Activated B cell treated with CpG ODN at 0.5 μM for 24 hours (primary cell): ENCODE measurements at regions of chr3 and their contacts with region 1.

Region 1: GRCh38 chr3:156554842-156555687 is at the start of gene SSR3:
- DNase-seq: peak; percentile 94
- ATAC-seq: peak; percentile 99
- H3K4me3 Mint-ChIP-seq: peak within 1 kb of the TSS; percentile 98
- H3K27ac Mint-ChIP-seq: peak within 1 kb of the TSS; percentile 91
- H3K4me1 Mint-ChIP-seq: peaks cover 37% of the 10 kb centered on the region
- H3K27me3 Mint-ChIP-seq: no peaks in the 10 kb centered on the region
- CTCF ChIP-seq: no peak
- total RNA-seq, gene SSR3: 64.3 and 69.2 TPM in 2 replicates

Region 2: DNA sequence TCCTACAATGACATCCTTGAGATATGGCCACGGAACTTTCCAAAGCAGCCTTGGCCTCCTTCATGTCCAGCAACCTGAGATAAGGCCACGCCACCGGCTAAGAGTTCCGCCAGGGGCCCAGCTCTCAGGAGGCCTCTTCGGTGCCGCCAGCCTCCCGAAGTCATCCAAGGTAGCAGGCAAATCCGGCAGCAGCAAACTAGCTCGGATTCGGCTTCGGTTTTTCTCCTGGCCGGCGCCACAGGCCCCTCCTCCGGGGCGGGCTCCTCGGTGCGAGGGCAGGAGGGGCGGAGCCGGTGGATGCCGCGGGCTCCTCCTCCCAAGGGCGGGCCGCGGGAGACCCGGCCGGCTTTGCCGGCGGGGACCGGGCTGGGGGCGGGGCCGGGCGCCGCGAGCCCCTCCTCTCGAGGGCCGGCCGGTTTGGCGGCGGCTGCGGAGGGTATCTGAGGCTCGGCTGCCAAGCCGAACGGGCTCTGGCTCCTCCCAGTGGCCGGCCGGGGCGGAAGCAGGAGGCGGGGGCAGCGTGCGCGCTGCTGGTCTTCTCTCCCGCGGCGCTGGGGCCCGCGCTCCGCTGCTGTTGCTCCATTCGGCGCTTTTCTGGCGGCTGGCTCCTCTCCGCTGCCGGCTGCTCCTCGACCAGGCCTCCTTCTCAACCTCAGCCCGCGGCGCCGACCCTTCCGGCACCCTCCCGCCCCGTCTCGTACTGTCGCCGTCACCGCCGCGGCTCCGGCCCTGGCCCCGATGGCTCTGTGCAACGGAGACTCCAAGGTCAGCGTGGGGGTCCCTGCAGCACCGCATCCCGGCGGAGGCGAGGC is 684.7 kb before region 1 on chr3 and contains the start of gene GMPS:
- CTCF ChIA-PET with region 1: no interaction called
- POLR2A ChIA-PET with region 1: no interaction called
- intact Hi-C with region 1: loop called (anchors 5 kb)
- DNase-seq: peak; percentile 97
- ATAC-seq: peak; percentile 92
- H3K4me3 Mint-ChIP-seq: peak within 1 kb of the TSS; percentile 92
- H3K27ac Mint-ChIP-seq: peak within 1 kb of the TSS; percentile 93
- H3K4me1 Mint-ChIP-seq: peaks cover 18% of the 10 kb centered on the region
- H3K27me3 Mint-ChIP-seq: no peaks in the 10 kb centered on the region
- CTCF ChIP-seq: no peak
- total RNA-seq, gene GMPS: 42.2 and 45.1 TPM in 2 replicates

Region 3: GRCh38 chr3:156816800-156817645 is 262.0 kb after region 1 on chr3:
- CTCF ChIA-PET with region 1: no interaction called
- POLR2A ChIA-PET with region 1: interaction called, 14 read pairs
- intact Hi-C with region 1: loop called (anchors 1 kb)
- DNase-seq: peak; percentile 93
- ATAC-seq: peak; percentile 83
- H3K4me3 Mint-ChIP-seq: peak overlapping the region; percentile 94
- H3K27ac Mint-ChIP-seq: peak overlapping the region; percentile 99
- H3K4me1 Mint-ChIP-seq: peaks cover 42% of the 10 kb centered on the region
- H3K27me3 Mint-ChIP-seq: no peaks in the 10 kb centered on the region
- CTCF ChIP-seq: no peak

Region 4: GRCh38 chr3:157029365-157029790 is 474.3 kb after region 1 on chr3:
- CTCF ChIA-PET with region 1: no interaction called
- POLR2A ChIA-PET with region 1: no interaction called
- intact Hi-C with region 1: loop called (anchors 1 kb)
- DNase-seq: peak; percentile 19
- ATAC-seq: peak; percentile 92
- H3K4me3 Mint-ChIP-seq: peak overlapping the region; percentile 15
- H3K27ac Mint-ChIP-seq: peak overlapping the region; percentile 77
- H3K4me1 Mint-ChIP-seq: peaks cover 30% of the 10 kb centered on the region
- H3K27me3 Mint-ChIP-seq: peaks cover 2% of the 10 kb centered on the region
- CTCF ChIP-seq: no peak

Region 5: DNA sequence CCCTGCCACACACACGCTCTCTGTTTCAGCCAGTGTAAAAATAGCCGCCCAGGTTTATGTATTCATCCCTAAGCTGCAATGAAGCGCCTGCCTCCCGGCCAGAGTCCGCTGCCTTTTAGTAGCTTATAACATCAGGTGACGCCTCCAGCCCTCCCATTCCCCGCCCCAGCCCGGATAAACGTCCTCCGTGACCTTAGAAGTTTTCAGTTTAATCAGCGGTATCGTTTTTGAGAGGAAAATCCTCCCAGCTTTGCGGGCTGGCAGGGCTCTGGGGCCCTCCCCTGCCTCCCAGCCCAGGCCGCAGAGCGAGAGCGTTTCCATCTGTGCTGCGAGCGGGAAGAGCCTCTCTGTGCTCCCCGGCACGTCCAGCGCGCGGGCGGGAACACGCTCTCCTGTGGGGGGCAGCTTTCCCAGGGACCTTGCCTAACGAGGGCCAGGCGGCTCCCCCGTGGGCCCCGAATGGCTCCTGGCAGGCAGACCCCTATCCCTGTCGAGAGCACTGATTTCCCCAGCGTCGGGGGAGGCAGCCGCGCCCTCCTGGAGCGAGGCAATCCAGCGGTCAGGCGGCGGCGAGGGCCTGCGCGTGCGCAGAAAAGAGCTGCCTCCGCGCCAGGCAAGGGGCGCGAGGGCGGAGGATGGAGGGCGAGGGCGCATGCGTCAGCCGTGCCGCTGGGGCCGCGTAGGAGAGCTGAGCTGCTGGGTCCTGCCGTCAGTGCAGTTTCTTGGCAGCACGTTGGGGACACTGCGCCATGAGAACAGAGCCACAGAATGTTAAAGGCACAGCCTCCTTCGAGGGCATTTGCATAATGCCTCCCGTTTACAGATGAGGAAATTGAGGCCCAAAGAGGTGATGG is 533.8 kb after region 1 on chr3:
- CTCF ChIA-PET with region 1: interaction called, 6 read pairs
- POLR2A ChIA-PET with region 1: interaction called, 30 read pairs
- intact Hi-C with region 1: loop called (anchors 1 kb)
- DNase-seq: peak; percentile 92
- ATAC-seq: peak; percentile 92
- H3K4me3 Mint-ChIP-seq: peak overlapping the region; percentile 90
- H3K27ac Mint-ChIP-seq: peak overlapping the region; percentile 90
- H3K4me1 Mint-ChIP-seq: peaks cover 26% of the 10 kb centered on the region
- H3K27me3 Mint-ChIP-seq: peaks cover 1% of the 10 kb centered on the region
- CTCF ChIP-seq: no peak

Region 6: DNA sequence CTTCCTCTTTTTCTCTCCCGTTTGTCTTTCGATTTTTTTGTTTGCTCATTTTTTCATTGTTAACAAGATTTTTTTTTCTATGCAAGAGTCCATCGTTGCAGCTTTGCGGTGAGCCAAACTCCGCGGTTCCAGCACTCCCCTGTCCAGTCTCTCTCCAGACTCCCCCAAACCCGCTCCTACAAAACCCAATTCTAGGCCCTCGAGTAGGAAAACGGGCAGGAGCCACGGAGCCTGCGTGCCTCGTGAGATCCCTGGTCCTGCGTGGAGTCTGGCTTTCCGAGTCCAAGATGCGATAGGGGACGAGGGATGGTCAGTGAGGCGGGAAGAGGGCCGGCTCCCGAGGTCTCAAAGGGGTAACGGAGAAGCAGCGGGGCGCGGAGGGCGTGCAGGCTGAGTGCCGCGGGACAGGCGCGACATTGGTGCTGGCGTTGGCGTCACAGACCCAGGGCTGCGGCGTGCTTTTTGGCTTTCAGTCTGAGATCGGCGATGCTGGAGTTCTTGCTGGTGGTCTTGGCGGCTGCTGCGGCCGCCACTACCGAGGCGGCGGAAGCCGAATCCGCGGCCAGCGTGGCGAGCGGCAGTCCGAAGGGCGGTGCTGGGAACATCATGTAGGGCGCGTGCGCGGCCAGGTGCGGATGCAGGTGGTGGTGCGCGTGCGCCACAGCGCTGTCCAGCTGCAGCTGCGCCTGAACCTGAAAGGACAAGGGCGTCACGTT is 1542.7 kb after region 1 on chr3:
- CTCF ChIA-PET with region 1: no interaction called
- POLR2A ChIA-PET with region 1: no interaction called
- intact Hi-C with region 1: loop called (anchors 1 kb)
- DNase-seq: peak; percentile 79
- ATAC-seq: peak; percentile 93
- H3K4me3 Mint-ChIP-seq: peak overlapping the region; percentile 98
- H3K27ac Mint-ChIP-seq: peak overlapping the region; percentile 74
- H3K4me1 Mint-ChIP-seq: peaks cover 22% of the 10 kb centered on the region
- H3K27me3 Mint-ChIP-seq: peaks cover 57% of the 10 kb centered on the region
- CTCF ChIP-seq: no peak